IMR-90 (cell line): ENCODE measurements at regions of chr1 and their contacts with region 1.

Region 1: GRCh38 chr1:226496453-226497015 is 52.0 kb upstream of the STUM start:
- DNase-seq: no peak
- ATAC-seq: no peak
- H3K4me3 ChIP-seq: no peak overlapping the region
- H3K27ac ChIP-seq: no peak overlapping the region
- H3K4me1 ChIP-seq: no peaks in the 10 kb centered on the region
- H3K27me3 ChIP-seq: peaks cover 16% of the 10 kb centered on the region
- CTCF ChIP-seq: no peak
- POLR2A ChIP-seq: no peak
- RAD21 ChIP-seq: no peak

Region 2: GRCh38 chr1:226506921-226507320 is 10.4 kb after region 1 on chr1:
- CTCF ChIA-PET with region 1: no interaction called
- POLR2A ChIA-PET with region 1: interaction called, 14 read pairs
- dilution Hi-C with region 1: no loop called
- in situ Hi-C with region 1: no loop called
- intact Hi-C with region 1: no loop called
- DNase-seq: no peak
- ATAC-seq: no peak
- H3K4me3 ChIP-seq: no peak overlapping the region
- H3K27ac ChIP-seq: no peak overlapping the region
- H3K4me1 ChIP-seq: no peaks in the 10 kb centered on the region
- H3K27me3 ChIP-seq: peaks cover 7% of the 10 kb centered on the region; the same call in 1 of the 2 replicates
- CTCF ChIP-seq: no peak
- POLR2A ChIP-seq: no peak
- RAD21 ChIP-seq: no peak

Region 3: GRCh38 chr1:226642876-226643576 is 146.5 kb after region 1 on chr1:
- CTCF ChIA-PET with region 1: no interaction called
- POLR2A ChIA-PET with region 1: no interaction called
- dilution Hi-C with region 1: no loop called
- in situ Hi-C with region 1: no loop called
- intact Hi-C with region 1: no loop called
- DNase-seq: peak; percentile 81
- ATAC-seq: peak; percentile 79
- H3K4me3 ChIP-seq: no peak overlapping the region
- H3K27ac ChIP-seq: no peak overlapping the region
- H3K4me1 ChIP-seq: peaks cover 22% of the 10 kb centered on the region
- H3K27me3 ChIP-seq: no peaks in the 10 kb centered on the region
- CTCF ChIP-seq: no peak
- POLR2A ChIP-seq: no peak
- RAD21 ChIP-seq: peak; percentile 20; the same call in 1 of the 2 replicates